Caco-2 (cell line): ENCODE measurements at regions of chr7 and their contacts with region 1.

Region 1: GRCh38 chr7:99975782-99976521 is at the start of gene AZGP1:
- DNase-seq: no peak
- H3K4me3 ChIP-seq: no peak within 1 kb of the TSS
- H3K4me3 Mint-ChIP-seq: no peak within 1 kb of the TSS
- H3K27ac Mint-ChIP-seq: no peak within 1 kb of the TSS
- H3K4me1 ChIP-seq: 0 out of 2 replicates have a peak, but pooled peaks cover 6% of the 10 kb centered on the region
- H3K4me1 Mint-ChIP-seq: peaks cover 9% of the 10 kb centered on the region
- H3K27me3 ChIP-seq: no peaks in the 10 kb centered on the region
- H3K27me3 Mint-ChIP-seq: peaks cover 8% of the 10 kb centered on the region
- CTCF ChIP-seq: no peak
- total RNA-seq, gene AZGP1: not detected in 2 replicates

Region 2: GRCh38 chr7:99910976-99911375 is 65.0 kb before region 1 on chr7:
- CTCF ChIA-PET with region 1: no interaction called
- POLR2A ChIA-PET with region 1: no interaction called
- intact Hi-C with region 1: loop called (anchors 1 kb)
- DNase-seq: no peak
- H3K4me3 ChIP-seq: no peak overlapping the region
- H3K4me3 Mint-ChIP-seq: no peak overlapping the region
- H3K27ac Mint-ChIP-seq: no peak overlapping the region
- H3K4me1 ChIP-seq: no peaks in the 10 kb centered on the region
- H3K4me1 Mint-ChIP-seq: no peaks in the 10 kb centered on the region
- H3K27me3 ChIP-seq: no peaks in the 10 kb centered on the region
- H3K27me3 Mint-ChIP-seq: no peaks in the 10 kb centered on the region
- CTCF ChIP-seq: no peak

Region 3: DNA sequence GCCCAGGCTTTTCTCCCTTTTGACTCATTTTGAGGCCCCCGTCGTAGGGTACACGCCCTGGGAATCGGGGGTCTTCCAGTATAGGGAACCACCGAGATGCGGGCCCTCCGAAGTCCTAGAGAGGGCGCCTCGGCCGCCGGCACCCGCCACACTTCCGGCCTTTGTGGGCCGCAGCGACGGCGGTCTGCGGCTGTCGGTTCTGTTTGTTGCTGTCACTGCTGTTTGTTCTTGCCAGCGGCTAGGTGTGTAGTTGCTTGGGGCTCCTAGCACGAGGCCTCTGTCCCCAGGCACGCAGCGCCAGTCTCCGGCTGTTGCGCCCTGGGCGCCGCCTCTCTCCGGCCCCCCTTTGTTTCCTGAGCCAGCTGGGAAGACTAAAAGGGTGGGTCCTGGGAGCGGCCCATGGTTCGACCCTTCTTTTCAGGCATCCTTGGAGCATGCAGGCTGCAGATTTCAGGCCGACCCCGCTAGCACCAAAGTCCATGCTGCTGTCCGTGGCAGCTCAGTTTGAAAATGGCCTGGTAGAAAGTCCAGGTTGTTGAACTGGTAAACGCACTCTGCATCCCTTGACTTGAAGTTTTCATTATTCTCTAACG is 21.7 kb after region 1 on chr7:
- CTCF ChIA-PET with region 1: no interaction called
- POLR2A ChIA-PET with region 1: no interaction called
- intact Hi-C with region 1: no loop called
- DNase-seq: peak; percentile 77 to 82
- H3K4me3 ChIP-seq: peak overlapping the region; percentile 38
- H3K4me3 Mint-ChIP-seq: peak overlapping the region; percentile 76
- H3K27ac Mint-ChIP-seq: peak overlapping the region; percentile 89
- H3K4me1 ChIP-seq: peaks cover 13% of the 10 kb centered on the region; the same call in 1 of the 2 replicates
- H3K4me1 Mint-ChIP-seq: peaks cover 7% of the 10 kb centered on the region
- H3K27me3 ChIP-seq: no peaks in the 10 kb centered on the region
- H3K27me3 Mint-ChIP-seq: no peaks in the 10 kb centered on the region
- CTCF ChIP-seq: peak; percentile 33 to 37